ENCODE measurements at regions of chr1 and their contacts with region 1.

Region 1: GRCh38 chr1:61641578-61642336 is 83.2 kb downstream of the TM2D1 start:
- DNase-seq: peak; percentile 87 to 93
- ATAC-seq: peak; percentile 91
- H3K4me3 ChIP-seq: no peak overlapping the region
- H3K27ac ChIP-seq: peak overlapping the region; percentile 76 to 98
- H3K4me1 ChIP-seq: peaks cover 5 to 17% of the 10 kb centered on the region in 2 donors
- H3K27me3 ChIP-seq: no peaks in the 10 kb centered on the region

Region 2: GRCh38 chr1:60969971-60970509 is 671.7 kb before region 1 on chr1:
- intact Hi-C with region 1: loop called in 1 of 2 experiments (anchors 5 kb)
- DNase-seq: no peak
- ATAC-seq: peak; percentile 78
- H3K4me3 ChIP-seq: no peak overlapping the region
- H3K27ac ChIP-seq: peak overlapping the region; percentile 49 to 74
- H3K4me1 ChIP-seq: peaks cover 6 to 12% of the 10 kb centered on the region in 2 donors
- H3K27me3 ChIP-seq: no peaks in the 10 kb centered on the region

Region 3: GRCh38 chr1:61362351-61362750 is 279.4 kb before region 1 on chr1:
- intact Hi-C with region 1: loop called in 1 of 2 experiments (anchors 5 kb)
- DNase-seq: no peak
- ATAC-seq: no peak
- H3K4me3 ChIP-seq: no peak overlapping the region
- H3K27ac ChIP-seq: no peak overlapping the region
- H3K4me1 ChIP-seq: peaks cover 0 to 4% of the 10 kb centered on the region in 2 donors
- H3K27me3 ChIP-seq: no peaks in the 10 kb centered on the region

Region 4: DNA sequence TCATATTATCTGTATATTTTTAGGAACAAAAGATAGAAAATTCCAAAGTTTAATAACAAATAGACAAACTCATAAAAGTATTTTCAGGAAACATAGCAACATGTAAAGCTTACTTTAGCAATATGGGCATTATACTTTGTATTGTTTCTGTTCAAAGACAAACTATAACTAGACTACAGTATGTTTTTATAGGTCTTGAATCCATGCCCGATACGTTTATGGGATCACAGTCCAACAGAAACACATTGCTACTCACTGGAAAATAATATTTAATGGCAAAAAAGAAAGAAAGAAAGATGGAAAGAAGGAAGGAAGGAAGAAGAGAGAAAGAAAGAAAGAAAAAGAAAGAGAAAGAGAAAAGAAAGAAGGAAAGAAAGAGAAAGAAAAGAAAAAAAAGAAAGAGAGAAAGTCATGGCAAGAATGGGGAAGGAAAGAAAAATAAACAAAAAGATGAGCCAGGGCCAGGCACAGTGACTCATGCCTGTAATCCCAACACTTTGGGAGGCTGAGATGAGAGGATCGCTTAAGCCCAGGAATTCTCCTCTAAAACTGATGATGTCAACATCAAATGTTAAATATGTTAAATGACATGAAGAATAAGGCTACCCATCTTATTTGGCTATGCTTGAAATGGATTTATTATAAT is 50.5 kb after region 1 on chr1:
- intact Hi-C with region 1: no loop called
- DNase-seq: no peak
- ATAC-seq: no peak
- H3K4me3 ChIP-seq: no peak overlapping the region
- H3K27ac ChIP-seq: no peak overlapping the region
- H3K4me1 ChIP-seq: no peaks in the 10 kb centered on the region
- H3K27me3 ChIP-seq: no peaks in the 10 kb centered on the region

Region 5: GRCh38 chr1:61842871-61843514 is 201.2 kb after region 1 on chr1:
- intact Hi-C with region 1: loop called in 1 of 2 experiments (anchors 10 kb)
- DNase-seq: no peak
- ATAC-seq: no peak
- H3K4me3 ChIP-seq: no peak overlapping the region
- H3K27ac ChIP-seq: peak overlapping the region; percentile 36 to 82
- H3K4me1 ChIP-seq: peaks cover 2 to 11% of the 10 kb centered on the region in 2 donors
- H3K27me3 ChIP-seq: no peaks in the 10 kb centered on the region